Caco-2 (cell line): ENCODE measurements at regions of chr2 and their contacts with region 1.

Region 1: GRCh38 chr2:101566632-101567228 is 91.8 kb upstream of the RFX8 start:
- DNase-seq: peak; percentile 96 to 97
- H3K4me3 ChIP-seq: no peak overlapping the region
- H3K4me3 Mint-ChIP-seq: peak overlapping the region; percentile 25
- H3K27ac Mint-ChIP-seq: peak overlapping the region; percentile 70
- H3K4me1 ChIP-seq: peaks cover 50% of the 10 kb centered on the region
- H3K4me1 Mint-ChIP-seq: peaks cover 68% of the 10 kb centered on the region
- H3K27me3 ChIP-seq: no peaks in the 10 kb centered on the region
- H3K27me3 Mint-ChIP-seq: no peaks in the 10 kb centered on the region
- CTCF ChIP-seq: no peak

Region 2: GRCh38 chr2:101361121-101361870 is 205.4 kb before region 1 on chr2:
- CTCF ChIA-PET with region 1: no interaction called
- POLR2A ChIA-PET with region 1: no interaction called
- intact Hi-C with region 1: loop called (anchors 1 kb)
- DNase-seq: no peak
- H3K4me3 ChIP-seq: no peak overlapping the region
- H3K4me3 Mint-ChIP-seq: peak overlapping the region; percentile 19
- H3K27ac Mint-ChIP-seq: peak overlapping the region; percentile 76
- H3K4me1 ChIP-seq: peaks cover 64% of the 10 kb centered on the region
- H3K4me1 Mint-ChIP-seq: peaks cover 37% of the 10 kb centered on the region
- H3K27me3 ChIP-seq: no peaks in the 10 kb centered on the region
- H3K27me3 Mint-ChIP-seq: no peaks in the 10 kb centered on the region
- CTCF ChIP-seq: no peak

Region 3: GRCh38 chr2:101546376-101547058 is 20.2 kb before region 1 on chr2:
- CTCF ChIA-PET with region 1: no interaction called
- POLR2A ChIA-PET with region 1: no interaction called
- intact Hi-C with region 1: no loop called
- DNase-seq: no peak
- H3K4me3 ChIP-seq: no peak overlapping the region
- H3K4me3 Mint-ChIP-seq: no peak overlapping the region
- H3K27ac Mint-ChIP-seq: no peak overlapping the region
- H3K4me1 ChIP-seq: no peaks in the 10 kb centered on the region
- H3K4me1 Mint-ChIP-seq: peaks cover 4% of the 10 kb centered on the region
- H3K27me3 ChIP-seq: no peaks in the 10 kb centered on the region
- H3K27me3 Mint-ChIP-seq: no peaks in the 10 kb centered on the region
- CTCF ChIP-seq: no peak

Region 4: DNA sequence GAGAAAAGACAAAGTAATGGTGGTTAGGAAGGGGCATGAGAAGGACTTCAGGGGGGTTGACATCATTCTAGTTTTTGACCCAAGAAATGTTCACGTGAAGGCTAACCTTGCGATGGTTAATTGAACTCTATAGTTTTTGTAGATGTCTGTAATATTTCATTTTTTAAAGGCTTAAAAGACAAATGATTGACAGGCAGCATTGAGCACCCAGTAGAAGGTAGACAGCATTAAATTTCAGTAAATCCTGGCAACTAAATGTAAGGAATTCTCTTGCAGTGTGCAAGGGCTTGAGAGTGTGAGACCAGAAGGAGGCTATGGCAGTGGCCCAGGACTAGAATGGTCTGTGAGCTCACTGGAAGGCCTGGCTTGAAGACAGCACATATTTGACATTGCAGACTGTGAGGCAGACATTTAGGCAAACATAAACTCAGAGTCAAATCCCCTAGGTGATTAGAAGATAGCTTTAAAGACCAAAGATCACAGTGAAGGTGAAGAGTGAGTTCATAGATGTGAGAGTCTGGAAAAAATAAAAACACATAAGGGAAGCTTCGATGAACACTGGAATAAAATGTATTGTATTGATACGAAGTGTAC is 30.7 kb after region 1 on chr2:
- CTCF ChIA-PET with region 1: interaction called, 3 read pairs
- POLR2A ChIA-PET with region 1: interaction called, 4 read pairs
- intact Hi-C with region 1: loop called (anchors 1 kb)
- DNase-seq: peak; percentile 69 to 77
- H3K4me3 ChIP-seq: no peak overlapping the region
- H3K4me3 Mint-ChIP-seq: peak overlapping the region; percentile 10
- H3K27ac Mint-ChIP-seq: peak overlapping the region; percentile 37
- H3K4me1 ChIP-seq: peaks cover 20% of the 10 kb centered on the region
- H3K4me1 Mint-ChIP-seq: peaks cover 34% of the 10 kb centered on the region
- H3K27me3 ChIP-seq: no peaks in the 10 kb centered on the region
- H3K27me3 Mint-ChIP-seq: no peaks in the 10 kb centered on the region
- CTCF ChIP-seq: no peak

Region 5: DNA sequence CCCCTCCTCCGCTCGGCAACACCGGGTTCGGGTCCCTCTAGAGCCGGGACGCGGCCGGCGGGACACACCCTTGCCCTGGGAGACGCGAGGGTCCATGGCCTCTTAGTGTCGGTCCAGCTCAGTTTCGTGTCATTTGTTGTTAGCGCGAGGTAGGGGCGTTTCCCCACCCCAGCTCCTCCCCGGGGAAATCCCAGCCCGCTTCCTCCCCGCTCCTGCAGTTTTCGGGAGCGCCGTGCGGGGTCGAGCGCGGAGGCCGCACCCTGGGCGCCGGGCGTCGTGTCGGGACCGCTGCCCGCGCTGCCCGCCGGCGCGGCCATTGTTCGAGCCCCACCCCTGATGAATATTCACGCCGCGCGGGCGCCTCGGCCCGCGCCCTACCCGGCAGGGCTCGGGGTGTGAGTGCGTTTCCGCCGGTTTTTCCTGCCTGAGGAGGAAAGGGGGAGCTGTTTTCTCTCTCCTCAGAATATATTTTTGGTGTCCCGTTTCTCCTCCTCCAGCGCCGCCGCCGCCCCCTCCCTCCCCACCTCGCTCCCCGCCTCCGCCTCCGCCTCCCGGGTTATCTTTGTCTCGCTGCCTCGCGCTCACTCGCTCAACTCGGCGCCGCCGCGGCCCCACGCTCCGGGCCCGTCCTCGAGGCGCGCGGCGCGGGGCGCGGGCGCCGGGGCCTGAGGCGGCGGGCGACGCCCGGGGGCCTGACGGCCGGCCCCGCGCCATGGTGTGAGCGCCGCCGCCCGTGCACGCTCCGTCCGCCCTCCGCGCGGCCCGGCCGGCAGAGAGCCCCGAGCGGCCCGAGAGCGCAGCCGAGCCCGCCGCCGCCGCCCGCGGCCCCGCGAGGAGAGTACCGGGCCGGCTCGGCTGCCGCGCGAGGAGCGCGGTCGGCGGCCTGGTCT is 130.6 kb after region 1 on chr2 and contains the start of gene MAP4K4:
- CTCF ChIA-PET with region 1: no interaction called
- POLR2A ChIA-PET with region 1: interaction called, 5 read pairs
- intact Hi-C with region 1: loop called (anchors 1 kb)
- DNase-seq: peak; percentile 86 to 87
- H3K4me3 ChIP-seq: peak within 1 kb of the TSS; percentile 47
- H3K4me3 Mint-ChIP-seq: no peak within 1 kb of the TSS
- H3K27ac Mint-ChIP-seq: peak within 1 kb of the TSS; percentile 82
- H3K4me1 ChIP-seq: peaks cover 27% of the 10 kb centered on the region
- H3K4me1 Mint-ChIP-seq: peaks cover 17% of the 10 kb centered on the region
- H3K27me3 ChIP-seq: no peaks in the 10 kb centered on the region
- H3K27me3 Mint-ChIP-seq: no peaks in the 10 kb centered on the region
- CTCF ChIP-seq: peak in 1 of 2 experiments; percentile 25
- total RNA-seq, gene MAP4K4: 257 and 263 TPM in 2 replicates

Region 6: GRCh38 chr2:101770726-101771125 is 204.0 kb after region 1 on chr2:
- CTCF ChIA-PET with region 1: interaction called, 4 read pairs
- POLR2A ChIA-PET with region 1: interaction called, 3 read pairs
- intact Hi-C with region 1: loop called (anchors 1 kb)
- DNase-seq: peak; percentile 67 to 70
- H3K4me3 ChIP-seq: no peak overlapping the region
- H3K4me3 Mint-ChIP-seq: no peak overlapping the region
- H3K27ac Mint-ChIP-seq: peak overlapping the region; percentile 72
- H3K4me1 ChIP-seq: peaks cover 50% of the 10 kb centered on the region
- H3K4me1 Mint-ChIP-seq: peaks cover 56% of the 10 kb centered on the region
- H3K27me3 ChIP-seq: no peaks in the 10 kb centered on the region
- H3K27me3 Mint-ChIP-seq: no peaks in the 10 kb centered on the region
- CTCF ChIP-seq: peak; percentile 43 to 56